ENCODE measurements at regions of chr3 and their contacts with region 1.

Region 1: DNA sequence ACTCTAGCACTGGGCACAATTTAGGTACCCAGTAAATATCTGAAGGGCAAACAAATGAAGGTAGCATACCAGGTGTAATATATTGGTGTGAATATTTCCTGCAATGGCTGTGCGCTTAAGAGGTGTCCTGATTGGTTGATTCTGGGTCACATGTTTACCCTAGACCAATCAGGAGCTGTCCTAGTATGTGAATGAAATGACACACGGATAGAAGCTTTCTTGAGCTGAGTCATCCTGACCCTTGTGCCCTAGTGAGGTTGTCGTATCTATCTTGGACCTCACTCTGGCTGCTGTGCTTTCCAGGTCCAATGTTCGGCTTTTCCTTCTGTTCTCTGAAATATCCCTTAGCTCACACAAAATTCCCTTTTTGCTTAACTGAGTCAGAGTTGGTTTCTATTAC is 58.1 kb upstream of the FOXP1 start:
- DNase-seq: no peak
- ATAC-seq: no peak
- H3K4me3 ChIP-seq: no peak overlapping the region
- H3K27ac ChIP-seq: no peak overlapping the region
- H3K4me1 ChIP-seq: no peaks in the 10 kb centered on the region
- H3K27me3 ChIP-seq: no peaks in the 10 kb centered on the region

Region 2: GRCh38 chr3:70550723-70551319 is 1090.9 kb before region 1 on chr3:
- intact Hi-C with region 1: loop called in 1 of 4 experiments (anchors 10 kb)
- DNase-seq: peak; percentile 62 to 85 (median 84)
- ATAC-seq: peak; percentile 75 to 89
- H3K4me3 ChIP-seq: no peak overlapping the region
- H3K27ac ChIP-seq: no peak overlapping the region
- H3K4me1 ChIP-seq: no peaks in the 10 kb centered on the region
- H3K27me3 ChIP-seq: no peaks in the 10 kb centered on the region

Measured in right cardiac atrium (tissue), 5 donors.